ENCODE measurements at regions of chr11 and their contacts with region 1.

Region 1: GRCh38 chr11:26087120-26087935 is 244.6 kb upstream of the ANO3 start:
- DNase-seq: peak; percentile 91
- H3K4me3 ChIP-seq: peak overlapping the region; percentile 46
- H3K27ac ChIP-seq: peak overlapping the region; percentile 99
- H3K4me1 ChIP-seq: peaks cover 82% of the 10 kb centered on the region
- CTCF ChIP-seq: no peak

Region 2: GRCh38 chr11:26017322-26017860 is 69.9 kb before region 1 on chr11:
- CTCF ChIA-PET with region 1: no interaction called
- POLR2A ChIA-PET with region 1: interaction called, 10 read pairs
- intact Hi-C with region 1: no loop called
- DNase-seq: no peak
- H3K4me3 ChIP-seq: no peak overlapping the region
- H3K27ac ChIP-seq: no peak overlapping the region
- H3K4me1 ChIP-seq: no peaks in the 10 kb centered on the region
- CTCF ChIP-seq: no peak

Region 3: GRCh38 chr11:26063915-26064314 is 23.4 kb before region 1 on chr11:
- CTCF ChIA-PET with region 1: no interaction called
- POLR2A ChIA-PET with region 1: interaction called, 12 read pairs
- intact Hi-C with region 1: no loop called
- DNase-seq: peak; percentile 29
- H3K4me3 ChIP-seq: no peak overlapping the region
- H3K27ac ChIP-seq: no peak overlapping the region
- H3K4me1 ChIP-seq: peaks cover 37% of the 10 kb centered on the region
- CTCF ChIP-seq: no peak

Region 4: GRCh38 chr11:26070714-26071380 is 16.5 kb before region 1 on chr11:
- CTCF ChIA-PET with region 1: interaction called, 10 read pairs
- POLR2A ChIA-PET with region 1: interaction called, 47 read pairs
- intact Hi-C with region 1: no loop called
- DNase-seq: no peak
- H3K4me3 ChIP-seq: no peak overlapping the region
- H3K27ac ChIP-seq: no peak overlapping the region
- H3K4me1 ChIP-seq: peaks cover 3% of the 10 kb centered on the region
- CTCF ChIP-seq: no peak

Region 5: GRCh38 chr11:26106726-26107125 is 19.4 kb after region 1 on chr11:
- CTCF ChIA-PET with region 1: no interaction called
- POLR2A ChIA-PET with region 1: interaction called, 25 read pairs
- intact Hi-C with region 1: loop called (anchors 1 kb)
- DNase-seq: peak; percentile 58
- H3K4me3 ChIP-seq: peak overlapping the region; percentile 4
- H3K27ac ChIP-seq: peak overlapping the region; percentile 57
- H3K4me1 ChIP-seq: peaks cover 51% of the 10 kb centered on the region
- CTCF ChIP-seq: peak; percentile 31; the same call in 1 of the 2 replicates

Region 6: DNA sequence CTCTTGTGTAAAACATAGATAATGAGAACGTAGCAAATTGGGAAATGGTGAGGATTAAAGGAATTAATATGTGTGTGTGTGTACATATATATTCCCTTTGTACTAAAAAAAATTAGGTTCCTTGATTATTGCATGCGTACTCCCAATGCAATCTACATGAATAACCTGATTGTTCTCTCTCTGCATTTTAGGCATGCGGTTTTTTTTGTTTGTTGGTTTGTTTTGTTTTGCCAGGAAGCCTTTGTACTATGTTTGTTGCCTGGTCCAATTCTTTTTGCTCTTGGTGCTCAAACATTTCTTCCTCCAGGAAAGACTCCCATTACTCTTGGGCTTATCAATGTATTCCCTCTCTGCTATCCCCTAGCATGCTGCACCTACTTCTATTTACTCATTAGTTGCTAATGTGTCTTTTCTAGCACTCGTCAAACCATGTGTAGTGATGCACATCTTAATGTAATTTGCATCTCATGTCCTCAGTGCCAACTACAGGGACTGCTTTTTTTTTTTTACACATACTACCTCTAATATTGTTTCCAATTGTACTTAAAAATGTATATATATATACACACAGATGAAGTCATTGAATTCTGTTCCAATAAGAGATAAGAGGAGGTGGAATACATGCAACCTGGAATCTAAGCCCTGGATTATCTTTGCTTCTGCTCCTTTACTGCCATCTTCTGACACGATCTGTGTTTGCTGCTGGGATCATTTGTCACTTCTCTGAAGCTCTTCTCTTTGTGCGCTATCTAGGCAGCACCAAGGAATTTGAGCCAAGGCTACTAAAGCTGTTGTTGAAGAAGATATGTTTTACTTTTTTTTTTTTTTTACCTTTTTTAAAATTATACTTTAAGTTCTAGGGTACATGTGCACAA is 47.4 kb after region 1 on chr11:
- CTCF ChIA-PET with region 1: no interaction called
- POLR2A ChIA-PET with region 1: interaction called, 10 read pairs
- intact Hi-C with region 1: loop called (anchors 1 kb)
- DNase-seq: peak; percentile 72
- H3K4me3 ChIP-seq: no peak overlapping the region
- H3K27ac ChIP-seq: peak overlapping the region; percentile 10
- H3K4me1 ChIP-seq: peaks cover 19% of the 10 kb centered on the region
- CTCF ChIP-seq: peak; percentile 87

Measured in OCI-LY7 (cell line).